ENCODE measurements at regions of chr4 and their contacts with region 1.

Region 1: DNA sequence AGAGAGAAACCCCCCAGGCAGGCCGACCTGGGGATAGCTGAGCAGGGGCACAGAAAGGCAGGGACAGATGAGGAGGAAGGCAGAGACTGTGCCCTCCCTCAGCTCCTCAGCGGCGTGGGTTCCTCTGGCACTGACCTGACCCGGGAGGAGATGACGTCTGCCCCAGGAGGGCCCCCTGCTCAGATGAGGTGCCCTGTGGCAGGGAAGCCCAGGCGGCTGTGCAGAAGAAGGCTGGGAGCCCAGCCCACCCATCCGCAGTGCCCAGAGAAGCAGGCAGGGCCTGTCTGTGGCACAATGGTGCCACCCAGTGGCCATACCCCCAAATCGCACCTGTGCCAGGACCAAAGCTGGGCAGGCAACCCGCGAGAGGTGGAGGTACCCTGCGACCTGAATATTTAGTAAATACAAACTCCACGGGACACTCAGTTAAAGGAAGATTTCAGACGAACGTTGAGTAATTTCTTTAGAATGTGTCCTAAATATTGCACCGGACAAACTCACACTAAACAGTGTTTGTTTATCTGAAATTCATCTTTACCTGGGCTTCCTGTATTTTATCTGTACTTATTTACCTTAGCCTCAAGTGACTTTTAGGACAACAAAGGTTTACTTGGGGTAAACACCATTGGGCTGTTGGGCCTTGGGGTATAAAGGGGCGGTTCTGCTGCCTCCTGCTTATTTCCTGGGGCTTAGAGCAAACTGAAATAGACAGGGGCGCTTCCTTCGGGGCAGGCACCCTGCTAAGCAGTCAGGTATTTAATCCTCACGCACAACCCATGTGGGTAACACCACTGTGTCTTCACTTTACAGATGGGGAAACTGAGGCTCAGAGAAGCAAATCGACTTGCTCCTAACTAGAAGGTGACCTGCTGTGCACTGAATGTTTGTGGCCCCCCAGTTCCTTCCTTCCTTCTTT is 46.5 kb upstream of the HMX1 start:
- DNase-seq: peak; percentile 93
- H3K4me3 ChIP-seq: no peak overlapping the region
- H3K27ac ChIP-seq: no peak overlapping the region
- H3K4me1 ChIP-seq: no peaks in the 10 kb centered on the region; a peak in 1 of 4 replicates
- H3K27me3 ChIP-seq: no peaks in the 10 kb centered on the region
- CTCF ChIP-seq: peak; percentile 64
- EP300 ChIP-seq: no peak
- RAD21 ChIP-seq: peak; percentile 92

Region 2: DNA sequence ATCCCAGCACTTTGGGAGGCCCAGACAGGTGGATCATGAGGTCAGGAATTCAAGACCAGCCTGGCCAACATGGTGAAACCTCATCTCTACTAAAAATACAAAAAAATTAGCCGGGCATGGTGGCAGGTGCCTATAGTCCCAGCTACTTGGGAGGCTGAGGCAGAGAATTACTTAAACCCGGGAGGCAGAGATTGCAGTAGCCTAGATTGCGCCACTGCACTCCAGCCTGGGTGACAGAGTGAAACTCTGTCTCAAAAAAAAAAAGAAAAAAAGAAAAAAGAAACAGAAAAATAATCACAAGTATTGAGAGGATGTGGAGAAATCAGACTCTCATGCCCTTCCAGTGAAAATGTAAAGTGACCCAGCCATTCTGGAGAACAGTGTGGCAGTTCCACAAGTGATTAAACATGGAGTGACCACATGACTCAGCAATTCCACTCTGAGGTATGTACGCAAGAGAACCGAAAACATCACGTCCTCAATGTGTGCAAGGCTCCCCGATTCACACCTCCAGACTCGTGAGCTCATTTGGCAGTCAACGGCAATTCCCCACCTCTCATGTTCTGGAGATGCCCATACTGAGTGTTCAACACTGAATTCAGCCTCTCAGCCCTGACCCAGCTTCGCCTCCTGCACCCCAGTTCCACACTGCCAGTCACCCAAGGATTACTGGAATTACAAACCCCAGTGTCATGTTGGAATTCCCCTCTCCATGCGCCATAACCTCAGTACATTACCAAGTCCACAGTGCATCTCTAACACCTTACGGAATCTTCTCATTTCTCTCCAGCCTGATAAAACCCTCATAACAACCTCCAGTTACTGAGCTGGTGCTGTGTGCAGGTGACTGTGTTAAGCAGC is 498.7 kb before region 1 on chr4:
- CTCF ChIA-PET with region 1: no interaction called
- POLR2A ChIA-PET with region 1: no interaction called
- DNase-seq: no peak
- H3K4me3 ChIP-seq: no peak overlapping the region
- H3K27ac ChIP-seq: no peak overlapping the region
- H3K4me1 ChIP-seq: no peaks in the 10 kb centered on the region
- H3K27me3 ChIP-seq: no peaks in the 10 kb centered on the region
- CTCF ChIP-seq: no peak
- EP300 ChIP-seq: no peak
- RAD21 ChIP-seq: no peak

Region 3: GRCh38 chr4:8468746-8469535 is 449.2 kb before region 1 on chr4:
- CTCF ChIA-PET with region 1: interaction called, 11 read pairs
- POLR2A ChIA-PET with region 1: no interaction called
- DNase-seq: peak; percentile 89
- H3K4me3 ChIP-seq: peak overlapping the region in 1 of 2 experiments; percentile 41; a peak in 1 of 4 replicates
- H3K27ac ChIP-seq: no peak overlapping the region
- H3K4me1 ChIP-seq: no peaks in the 10 kb centered on the region
- H3K27me3 ChIP-seq: no peaks in the 10 kb centered on the region
- CTCF ChIP-seq: peak; percentile 93
- EP300 ChIP-seq: no peak
- RAD21 ChIP-seq: peak; percentile 83

Region 4: GRCh38 chr4:8607603-8608481 is 310.3 kb before region 1 on chr4:
- CTCF ChIA-PET with region 1: interaction called, 89 read pairs
- POLR2A ChIA-PET with region 1: interaction called, 3 read pairs
- DNase-seq: peak; percentile 97
- H3K4me3 ChIP-seq: peak overlapping the region in 1 of 2 experiments; percentile 48; a peak in 1 of 4 replicates
- H3K27ac ChIP-seq: no peak overlapping the region
- H3K4me1 ChIP-seq: peaks cover 0 to 10% of the 10 kb centered on the region in 2 experiments; a peak in 1 of 4 replicates
- H3K27me3 ChIP-seq: no peaks in the 10 kb centered on the region
- CTCF ChIP-seq: peak; percentile 87
- EP300 ChIP-seq: no peak
- RAD21 ChIP-seq: peak; percentile 84

Region 5: GRCh38 chr4:8639777-8640720 is 278.1 kb before region 1 on chr4:
- CTCF ChIA-PET with region 1: interaction called, 26 read pairs
- POLR2A ChIA-PET with region 1: no interaction called
- DNase-seq: no peak
- H3K4me3 ChIP-seq: no peak overlapping the region
- H3K27ac ChIP-seq: no peak overlapping the region
- H3K4me1 ChIP-seq: no peaks in the 10 kb centered on the region
- H3K27me3 ChIP-seq: no peaks in the 10 kb centered on the region
- CTCF ChIP-seq: no peak
- EP300 ChIP-seq: no peak
- RAD21 ChIP-seq: no peak

Region 6: DNA sequence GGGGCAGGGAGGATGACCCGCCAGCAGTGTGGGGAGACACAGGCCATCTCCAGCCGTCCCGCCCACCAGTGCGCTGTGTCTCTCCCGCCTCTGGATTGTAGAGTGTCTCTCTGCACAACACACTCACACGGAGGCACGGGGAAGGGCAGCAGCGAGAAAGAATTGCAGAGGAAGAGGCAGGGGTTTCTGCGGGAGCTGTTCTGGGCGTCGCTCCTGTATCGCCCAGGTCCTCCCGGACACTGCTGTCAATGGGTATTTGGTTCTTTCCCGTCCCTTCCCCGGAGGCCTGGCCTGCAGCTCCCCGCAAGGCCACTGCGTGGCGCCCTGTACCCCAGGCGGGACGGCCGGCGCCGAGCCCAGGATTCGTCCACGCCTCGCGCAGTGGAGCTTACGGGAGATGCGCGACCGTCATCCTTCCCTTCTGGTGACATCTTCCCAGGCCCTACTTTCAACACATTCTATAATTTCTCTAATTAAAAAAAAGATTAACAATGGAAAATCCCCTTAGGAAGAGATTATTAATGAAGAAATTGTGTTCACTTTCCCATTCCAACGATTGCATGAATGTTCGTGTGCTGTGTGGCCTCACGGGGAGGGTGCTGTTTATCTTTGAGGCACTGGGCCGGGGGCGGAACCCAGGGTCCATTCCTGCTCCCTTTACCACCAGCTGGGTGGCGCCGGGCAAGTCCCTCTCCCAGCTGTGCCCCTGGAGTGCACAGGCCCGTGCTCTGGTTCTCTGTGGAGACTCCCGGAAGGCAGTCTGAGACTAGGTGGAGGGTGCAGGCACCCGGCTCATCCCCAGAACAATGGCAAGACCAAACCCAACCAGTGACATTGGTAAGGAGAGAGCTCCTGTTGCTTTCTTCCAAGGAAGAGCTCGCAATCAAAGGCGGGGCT is 229.8 kb before region 1 on chr4:
- CTCF ChIA-PET with region 1: interaction called, 37 read pairs
- POLR2A ChIA-PET with region 1: no interaction called
- DNase-seq: peak; percentile 86
- H3K4me3 ChIP-seq: no peak overlapping the region
- H3K27ac ChIP-seq: no peak overlapping the region
- H3K4me1 ChIP-seq: peaks cover 0 to 2% of the 10 kb centered on the region in 2 experiments; a peak in 1 of 4 replicates
- H3K27me3 ChIP-seq: no peaks in the 10 kb centered on the region
- CTCF ChIP-seq: peak; percentile 17; the same call in 1 of the 2 replicates
- EP300 ChIP-seq: no peak
- RAD21 ChIP-seq: peak; percentile 75

Region 7: DNA sequence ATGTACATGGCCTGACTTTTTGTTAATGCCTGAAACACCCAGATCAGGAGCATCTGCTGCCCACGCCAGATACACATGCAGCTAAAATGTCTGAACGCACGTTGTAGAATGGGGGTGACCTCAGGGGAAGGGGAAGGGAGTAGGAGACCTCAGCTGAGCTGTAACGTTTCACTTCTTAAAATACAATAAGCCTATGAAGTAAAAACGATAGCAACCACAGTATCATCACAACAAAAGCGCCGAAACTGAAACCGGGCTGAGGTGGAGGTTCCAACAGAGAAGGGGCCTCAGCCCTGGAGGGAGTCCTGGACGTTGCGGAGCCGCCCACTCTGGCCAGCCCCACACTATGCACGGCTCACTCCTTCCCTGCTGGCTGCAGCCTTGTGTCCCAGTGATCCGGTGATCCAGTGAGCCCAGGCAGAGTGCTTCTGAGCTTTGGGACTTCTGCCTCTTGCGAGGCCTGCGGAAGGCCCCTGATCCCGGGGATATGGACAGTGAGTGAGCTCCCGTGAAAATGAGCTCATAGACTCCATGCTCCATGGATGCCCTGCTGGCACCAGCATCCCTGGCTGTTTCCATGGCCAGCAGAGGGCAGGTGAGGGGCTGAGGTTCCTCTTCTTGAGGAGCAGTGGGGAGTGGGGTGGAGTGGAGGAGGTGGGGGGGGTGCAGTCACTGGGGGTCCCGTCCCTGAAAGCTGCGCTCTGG is 98.5 kb before region 1 on chr4:
- CTCF ChIA-PET with region 1: interaction called, 10 read pairs
- POLR2A ChIA-PET with region 1: no interaction called
- DNase-seq: peak; percentile 37
- H3K4me3 ChIP-seq: no peak overlapping the region
- H3K27ac ChIP-seq: no peak overlapping the region; a peak in 1 of 4 replicates
- H3K4me1 ChIP-seq: peaks cover 0 to 20% of the 10 kb centered on the region in 2 experiments; a peak in 1 of 4 replicates
- H3K27me3 ChIP-seq: no peaks in the 10 kb centered on the region
- CTCF ChIP-seq: no peak
- EP300 ChIP-seq: no peak
- RAD21 ChIP-seq: no peak

Region 8: DNA sequence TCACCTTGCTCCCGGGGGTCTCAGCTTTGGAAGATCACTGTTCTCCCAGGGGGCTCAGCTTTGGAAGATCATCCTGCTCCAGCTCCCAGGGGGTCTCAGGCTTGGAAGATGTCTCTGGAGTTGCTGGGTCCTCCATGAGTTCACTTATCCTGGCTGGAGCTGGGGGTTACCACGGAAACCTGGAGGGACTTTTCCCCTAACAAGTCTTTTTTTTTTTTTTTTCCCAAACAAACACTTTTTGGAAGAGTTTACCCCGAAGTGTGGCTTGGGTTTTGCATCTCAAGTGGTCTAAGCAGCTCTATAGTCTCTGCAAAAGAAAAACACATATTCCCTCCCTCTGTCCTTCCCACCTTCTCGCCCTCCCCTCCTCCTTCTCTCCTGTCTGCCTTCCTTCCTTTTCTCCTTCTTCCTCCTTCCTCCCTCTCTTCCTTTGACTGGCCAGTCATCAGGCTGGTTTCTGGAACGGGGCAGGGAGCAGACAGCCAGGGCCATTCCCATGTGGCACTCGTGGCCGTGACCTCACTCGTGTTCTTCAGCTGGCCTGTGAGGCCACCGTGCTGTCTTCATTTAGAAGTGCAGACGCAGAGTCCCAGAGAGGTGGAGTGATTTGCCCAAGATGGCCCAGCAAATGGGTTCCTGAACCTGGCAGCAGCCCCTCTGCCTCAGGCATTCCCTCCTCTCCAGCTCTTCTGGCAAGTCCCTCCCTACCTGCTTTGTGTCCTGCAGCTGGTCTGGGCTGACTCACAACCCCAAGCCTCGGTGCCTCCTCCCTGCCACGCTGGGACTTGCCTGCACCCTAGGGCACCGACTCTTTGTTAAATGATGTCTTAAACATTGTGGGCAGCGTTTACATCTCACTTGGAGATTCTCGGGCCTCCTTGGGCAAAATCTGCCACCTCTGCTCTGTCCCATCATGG is 20.6 kb before region 1 on chr4:
- CTCF ChIA-PET with region 1: interaction called, 64 read pairs
- POLR2A ChIA-PET with region 1: no interaction called
- DNase-seq: no peak
- H3K4me3 ChIP-seq: no peak overlapping the region
- H3K27ac ChIP-seq: no peak overlapping the region
- H3K4me1 ChIP-seq: no peaks in the 10 kb centered on the region
- H3K27me3 ChIP-seq: no peaks in the 10 kb centered on the region
- CTCF ChIP-seq: no peak
- EP300 ChIP-seq: no peak
- RAD21 ChIP-seq: no peak

Measured in SK-N-SH (cell line).